ENCODE measurements at regions of chr2 and their contacts with region 1.

Region 1: DNA sequence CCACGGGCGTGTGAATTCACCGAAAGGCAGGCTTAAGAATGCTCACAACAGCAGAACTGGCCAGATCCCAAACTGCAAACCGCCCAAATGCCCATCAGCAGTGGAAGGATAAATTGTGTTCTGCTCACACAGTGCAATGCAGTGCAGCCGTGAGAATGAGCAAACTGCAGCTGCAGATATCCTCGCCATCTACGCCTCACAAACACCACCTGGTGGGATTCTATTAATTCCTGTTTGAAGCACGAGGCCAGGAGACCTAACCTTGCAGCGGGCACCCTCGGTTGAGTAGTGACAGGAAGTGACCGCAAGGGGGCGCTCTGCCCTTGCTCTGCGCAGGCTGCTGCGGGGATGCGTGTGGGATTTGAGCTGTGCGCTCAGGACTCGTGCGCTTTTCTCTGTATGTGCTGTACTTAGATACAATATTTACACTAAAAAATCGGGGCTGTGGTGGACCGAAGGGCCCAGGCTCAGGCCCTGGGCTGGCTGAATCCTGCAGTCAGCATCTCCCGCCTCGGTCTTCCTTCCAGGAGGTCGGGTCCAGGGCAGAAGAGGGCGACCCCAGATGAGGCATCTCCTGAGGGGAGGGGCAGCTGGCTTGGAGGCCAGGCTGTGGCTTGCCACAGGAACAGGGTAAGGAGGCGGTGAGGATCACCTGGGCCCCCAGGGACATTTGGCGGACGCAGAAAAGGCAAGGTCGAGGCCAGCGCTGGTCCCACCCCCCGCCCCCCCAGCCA is 19.8 kb upstream of the PDIA6 start:
- DNase-seq: peak; percentile 54 to 89 (median 77)
- ATAC-seq: peak; percentile 89 to 92 (median 90)
- H3K4me3 ChIP-seq: no peak overlapping the region
- H3K4me3 Mint-ChIP-seq: peak overlapping the region in 1 of 3 donors; percentile 33
- H3K27ac ChIP-seq: no peak overlapping the region
- H3K27ac Mint-ChIP-seq: peak overlapping the region in 1 of 2 donors; percentile 23
- H3K4me1 ChIP-seq: peaks cover 0 to 18% of the 10 kb centered on the region in 2 experiments
- H3K4me1 Mint-ChIP-seq: peaks cover 5 to 10% (median 8%) of the 10 kb centered on the region in 3 donors
- H3K27me3 ChIP-seq: peaks cover 0 to 56% of the 10 kb centered on the region in 2 experiments
- H3K27me3 Mint-ChIP-seq: peaks cover 4 to 30% of the 10 kb centered on the region in 2 donors

Region 2: GRCh38 chr2:10103179-10103732 is 729.1 kb before region 1 on chr2:
- CTCF ChIA-PET with region 1: interaction called in 1 of 2 experiments, 10 read pairs
- POLR2A ChIA-PET with region 1: no interaction called
- DNase-seq: no peak
- ATAC-seq: no peak
- H3K4me3 ChIP-seq: no peak overlapping the region
- H3K4me3 Mint-ChIP-seq: no peak overlapping the region
- H3K27ac ChIP-seq: no peak overlapping the region
- H3K27ac Mint-ChIP-seq: no peak overlapping the region
- H3K4me1 ChIP-seq: no peaks in the 10 kb centered on the region
- H3K4me1 Mint-ChIP-seq: no peaks in the 10 kb centered on the region
- H3K27me3 ChIP-seq: peaks cover 0 to 7% of the 10 kb centered on the region in 2 experiments
- H3K27me3 Mint-ChIP-seq: peaks cover 3 to 4% of the 10 kb centered on the region in 2 donors

Region 3: DNA sequence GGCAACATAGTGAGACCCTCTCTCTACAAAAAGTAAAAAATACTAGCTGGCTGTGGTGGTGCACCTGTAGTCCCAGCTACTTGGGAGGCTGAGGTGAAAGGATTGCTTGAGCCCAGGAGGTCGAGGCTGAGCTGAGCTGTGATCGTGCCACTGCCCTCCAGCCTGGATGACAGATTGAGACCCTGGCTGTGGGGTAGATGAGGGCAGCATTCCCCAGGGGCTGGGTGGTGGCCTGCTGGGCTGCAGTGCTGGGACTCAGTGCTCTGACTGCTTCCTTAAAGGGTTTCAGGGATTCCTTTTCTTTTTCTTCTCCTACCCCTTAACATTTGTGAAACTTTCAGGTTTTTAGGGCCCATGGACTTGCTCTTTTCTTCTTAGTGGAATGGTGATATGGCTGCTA is 102.7 kb before region 1 on chr2:
- CTCF ChIA-PET with region 1: no interaction called
- POLR2A ChIA-PET with region 1: no interaction called
- DNase-seq: no peak
- ATAC-seq: no peak
- H3K4me3 ChIP-seq: no peak overlapping the region
- H3K4me3 Mint-ChIP-seq: no peak overlapping the region
- H3K27ac ChIP-seq: no peak overlapping the region
- H3K27ac Mint-ChIP-seq: no peak overlapping the region
- H3K4me1 ChIP-seq: no peaks in the 10 kb centered on the region
- H3K4me1 Mint-ChIP-seq: no peaks in the 10 kb centered on the region
- H3K27me3 ChIP-seq: peaks cover 4 to 11% of the 10 kb centered on the region in 2 experiments
- H3K27me3 Mint-ChIP-seq: peaks cover 10 to 14% of the 10 kb centered on the region in 2 donors

Region 4: GRCh38 chr2:10812362-10813162 is 19.8 kb before region 1 on chr2 and contains the start of gene PDIA6:
- CTCF ChIA-PET with region 1: interaction called, 5 to 10 read pairs
- POLR2A ChIA-PET with region 1: interaction called in 1 of 2 experiments, 3 read pairs
- DNase-seq: peak; percentile 83 to 95 (median 91)
- ATAC-seq: peak; percentile 92 to 95 (median 92)
- H3K4me3 ChIP-seq: peak within 1 kb of the TSS; percentile 57 to 66
- H3K4me3 Mint-ChIP-seq: peak within 1 kb of the TSS; percentile 89 to 93 (median 91)
- H3K27ac ChIP-seq: peak within 1 kb of the TSS; percentile 32
- H3K27ac Mint-ChIP-seq: peak within 1 kb of the TSS; percentile 88
- H3K4me1 ChIP-seq: peaks cover 12 to 32% of the 10 kb centered on the region in 2 experiments
- H3K4me1 Mint-ChIP-seq: peaks cover 28 to 42% (median 42%) of the 10 kb centered on the region in 3 donors
- H3K27me3 ChIP-seq: peaks cover 0 to 3% of the 10 kb centered on the region in 2 experiments
- H3K27me3 Mint-ChIP-seq: no peaks in the 10 kb centered on the region
- total RNA-seq, gene PDIA6: 32.6 to 72.3 (median 50.9) TPM

Region 5: GRCh38 chr2:10846110-10846861 is 13.9 kb after region 1 on chr2:
- CTCF ChIA-PET with region 1: interaction called in 1 of 2 experiments, 10 read pairs
- POLR2A ChIA-PET with region 1: no interaction called
- DNase-seq: no peak
- ATAC-seq: no peak
- H3K4me3 ChIP-seq: no peak overlapping the region
- H3K4me3 Mint-ChIP-seq: no peak overlapping the region
- H3K27ac ChIP-seq: no peak overlapping the region
- H3K27ac Mint-ChIP-seq: no peak overlapping the region
- H3K4me1 ChIP-seq: no peaks in the 10 kb centered on the region
- H3K4me1 Mint-ChIP-seq: no peaks in the 10 kb centered on the region
- H3K27me3 ChIP-seq: peaks cover 0 to 34% of the 10 kb centered on the region in 2 experiments
- H3K27me3 Mint-ChIP-seq: peaks cover 11 to 18% of the 10 kb centered on the region in 2 donors

Region 6: GRCh38 chr2:11004199-11004598 is 171.8 kb after region 1 on chr2:
- CTCF ChIA-PET with region 1: no interaction called
- POLR2A ChIA-PET with region 1: no interaction called
- DNase-seq: no peak
- ATAC-seq: no peak
- H3K4me3 ChIP-seq: no peak overlapping the region
- H3K4me3 Mint-ChIP-seq: no peak overlapping the region
- H3K27ac ChIP-seq: no peak overlapping the region
- H3K27ac Mint-ChIP-seq: no peak overlapping the region
- H3K4me1 ChIP-seq: no peaks in the 10 kb centered on the region
- H3K4me1 Mint-ChIP-seq: no peaks in the 10 kb centered on the region
- H3K27me3 ChIP-seq: peaks cover 0 to 29% of the 10 kb centered on the region in 2 experiments
- H3K27me3 Mint-ChIP-seq: peaks cover 12 to 24% of the 10 kb centered on the region in 2 donors

Region 7: DNA sequence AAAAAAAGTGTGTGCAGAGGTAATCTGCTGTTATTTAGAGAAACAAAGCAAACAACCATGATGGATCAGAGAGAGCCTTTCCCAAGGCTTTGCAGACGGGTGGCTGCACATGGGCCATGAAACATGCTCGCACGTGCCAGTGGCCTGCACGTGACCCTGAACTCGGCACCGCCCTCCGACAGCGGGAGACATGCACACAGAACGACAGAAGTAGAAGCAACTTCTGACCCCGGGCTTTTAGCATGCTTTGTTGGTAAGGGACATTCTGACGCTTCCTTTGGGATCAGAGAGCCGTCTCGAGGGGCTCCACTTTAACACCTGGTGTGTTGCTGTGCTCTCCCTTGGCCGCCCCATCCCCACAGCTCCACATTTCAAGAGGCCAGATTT is 191.9 kb after region 1 on chr2:
- CTCF ChIA-PET with region 1: no interaction called
- POLR2A ChIA-PET with region 1: no interaction called
- DNase-seq: no peak
- ATAC-seq: no peak
- H3K4me3 ChIP-seq: no peak overlapping the region
- H3K4me3 Mint-ChIP-seq: no peak overlapping the region
- H3K27ac ChIP-seq: no peak overlapping the region
- H3K27ac Mint-ChIP-seq: no peak overlapping the region
- H3K4me1 ChIP-seq: no peaks in the 10 kb centered on the region
- H3K4me1 Mint-ChIP-seq: no peaks in the 10 kb centered on the region
- H3K27me3 ChIP-seq: peaks cover 0 to 17% of the 10 kb centered on the region in 2 experiments
- H3K27me3 Mint-ChIP-seq: peaks cover 3 to 10% of the 10 kb centered on the region in 2 donors

Region 8: DNA sequence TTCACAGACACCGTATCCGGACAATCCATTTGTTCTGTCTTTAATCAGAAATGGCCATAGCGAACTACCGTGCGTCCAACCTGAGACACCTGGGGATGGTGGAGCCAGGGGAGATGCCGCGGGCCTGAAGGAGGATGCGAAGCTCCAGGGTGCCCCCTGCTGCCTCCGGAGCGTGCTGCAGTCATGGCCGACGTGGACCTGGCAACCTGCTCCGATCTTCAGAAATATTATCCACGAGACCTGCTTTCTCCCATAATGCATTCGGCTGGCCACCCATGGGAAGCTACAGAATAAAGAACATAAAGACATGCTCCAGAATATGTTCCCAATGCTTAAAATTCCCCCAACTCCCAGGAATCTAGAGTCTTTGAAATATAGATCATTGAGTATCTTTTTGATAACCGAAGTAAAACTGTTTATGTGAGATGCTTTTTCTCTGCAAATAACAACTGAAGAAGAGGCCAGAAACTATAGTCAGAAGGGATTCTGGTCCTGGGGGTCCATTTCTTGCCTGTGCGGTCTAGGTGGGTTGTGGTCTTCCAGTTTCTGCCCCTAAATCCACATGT is 292.2 kb after region 1 on chr2:
- CTCF ChIA-PET with region 1: interaction called, 17 to 60 read pairs
- POLR2A ChIA-PET with region 1: no interaction called
- DNase-seq: peak in 29 of 35 experiments; percentile 14 to 69 (median 48)
- ATAC-seq: peak in 3 of 4 experiments; percentile 46 to 72 (median 55)
- H3K4me3 ChIP-seq: no peak overlapping the region
- H3K4me3 Mint-ChIP-seq: no peak overlapping the region
- H3K27ac ChIP-seq: no peak overlapping the region
- H3K27ac Mint-ChIP-seq: no peak overlapping the region
- H3K4me1 ChIP-seq: peaks cover 0 to 6% of the 10 kb centered on the region in 2 experiments
- H3K4me1 Mint-ChIP-seq: peaks cover 11 to 21% (median 14%) of the 10 kb centered on the region in 3 donors
- H3K27me3 ChIP-seq: peaks cover 0 to 7% of the 10 kb centered on the region in 2 experiments
- H3K27me3 Mint-ChIP-seq: no peaks in the 10 kb centered on the region

Region 9: GRCh38 chr2:11129598-11130449 is 297.5 kb after region 1 on chr2:
- CTCF ChIA-PET with region 1: interaction called, 17 to 60 read pairs
- POLR2A ChIA-PET with region 1: no interaction called
- DNase-seq: peak; percentile 65 to 89 (median 79)
- ATAC-seq: peak; percentile 91 to 94 (median 92)
- H3K4me3 ChIP-seq: peak overlapping the region; percentile 39 to 50
- H3K4me3 Mint-ChIP-seq: peak overlapping the region; percentile 69 to 85 (median 73)
- H3K27ac ChIP-seq: peak overlapping the region; percentile 59
- H3K27ac Mint-ChIP-seq: peak overlapping the region; percentile 79 to 84
- H3K4me1 ChIP-seq: peaks cover 10 to 48% of the 10 kb centered on the region in 2 experiments
- H3K4me1 Mint-ChIP-seq: peaks cover 27 to 43% (median 30%) of the 10 kb centered on the region in 3 donors
- H3K27me3 ChIP-seq: no peaks in the 10 kb centered on the region
- H3K27me3 Mint-ChIP-seq: no peaks in the 10 kb centered on the region

Region 10: GRCh38 chr2:11583840-11584524 is 751.6 kb after region 1 on chr2:
- CTCF ChIA-PET with region 1: interaction called in 1 of 2 experiments, 14 read pairs
- POLR2A ChIA-PET with region 1: no interaction called
- DNase-seq: peak in 31 of 35 experiments; percentile 14 to 63 (median 32)
- ATAC-seq: peak; percentile 60 to 79 (median 76)
- H3K4me3 ChIP-seq: no peak overlapping the region
- H3K4me3 Mint-ChIP-seq: no peak overlapping the region
- H3K27ac ChIP-seq: no peak overlapping the region
- H3K27ac Mint-ChIP-seq: no peak overlapping the region
- H3K4me1 ChIP-seq: no peaks in the 10 kb centered on the region
- H3K4me1 Mint-ChIP-seq: peaks cover 0 to 5% (median 3%) of the 10 kb centered on the region in 3 donors
- H3K27me3 ChIP-seq: peaks cover 0 to 27% of the 10 kb centered on the region in 2 experiments
- H3K27me3 Mint-ChIP-seq: peaks cover 7 to 12% of the 10 kb centered on the region in 2 donors